ENCODE measurements at regions of chr1 and their contacts with region 1.

Region 1: GRCh38 chr1:193104906-193105820 is at the start of gene GLRX2:
- DNase-seq: peak; percentile 95
- total RNA-seq, gene GLRX2: 29.0 TPM

Region 2: DNA sequence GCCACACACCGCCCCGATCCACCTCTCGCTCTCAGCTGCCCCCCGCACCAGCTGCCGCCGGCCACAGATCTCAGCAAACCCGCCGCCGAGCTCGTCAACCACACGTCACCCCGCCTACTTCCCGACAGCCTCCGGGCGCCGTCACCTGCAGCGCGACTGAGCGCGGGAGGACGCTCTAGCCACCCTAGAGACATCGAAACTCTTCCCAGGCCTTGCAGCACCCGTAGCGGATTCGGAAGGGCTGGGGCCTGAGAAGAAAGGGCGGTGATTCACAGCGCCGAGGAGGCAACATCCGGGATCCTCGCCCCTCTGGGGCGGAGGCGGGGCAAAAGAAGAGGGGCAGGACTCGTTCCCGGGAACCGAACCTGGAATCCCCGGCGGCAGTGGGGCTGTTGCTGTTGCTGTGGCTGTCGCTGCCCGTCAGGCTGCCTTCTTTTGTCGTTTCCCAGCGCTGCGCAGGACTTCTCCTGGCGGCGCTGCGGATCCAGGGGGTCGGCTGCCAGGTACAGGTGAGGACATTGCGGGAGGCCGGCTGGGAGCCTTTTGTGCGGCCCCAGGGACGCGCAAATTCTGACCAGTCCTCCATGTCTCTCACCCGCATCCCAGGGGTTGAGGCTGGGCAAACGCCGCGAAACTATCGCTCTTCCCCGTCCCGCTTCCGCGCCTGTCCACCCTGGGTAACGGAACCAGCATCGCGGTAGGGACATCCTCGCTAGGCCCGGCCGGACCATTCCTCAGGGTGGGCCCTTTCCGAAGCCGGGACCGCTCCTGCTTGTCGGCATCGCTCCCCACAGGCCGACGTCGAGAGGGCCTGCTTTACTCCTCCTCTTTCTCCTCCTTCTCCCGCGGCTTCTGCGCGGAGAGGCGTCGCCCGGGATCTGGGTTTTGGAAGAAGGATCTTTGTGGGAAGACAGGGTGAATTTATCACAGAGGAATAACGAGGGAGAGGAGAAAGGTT is 45.6 kb before region 1 on chr1 and contains the starts of genes RO60 and UCHL5:
- intact Hi-C with region 1: loop called (anchors 1 kb)
- DNase-seq: peak; percentile 99
- total RNA-seq, gene RO60: 61.6 TPM
- total RNA-seq, gene UCHL5: 26.4 TPM